ENCODE measurements at regions of chr18 and their contacts with region 1.

Region 1: DNA sequence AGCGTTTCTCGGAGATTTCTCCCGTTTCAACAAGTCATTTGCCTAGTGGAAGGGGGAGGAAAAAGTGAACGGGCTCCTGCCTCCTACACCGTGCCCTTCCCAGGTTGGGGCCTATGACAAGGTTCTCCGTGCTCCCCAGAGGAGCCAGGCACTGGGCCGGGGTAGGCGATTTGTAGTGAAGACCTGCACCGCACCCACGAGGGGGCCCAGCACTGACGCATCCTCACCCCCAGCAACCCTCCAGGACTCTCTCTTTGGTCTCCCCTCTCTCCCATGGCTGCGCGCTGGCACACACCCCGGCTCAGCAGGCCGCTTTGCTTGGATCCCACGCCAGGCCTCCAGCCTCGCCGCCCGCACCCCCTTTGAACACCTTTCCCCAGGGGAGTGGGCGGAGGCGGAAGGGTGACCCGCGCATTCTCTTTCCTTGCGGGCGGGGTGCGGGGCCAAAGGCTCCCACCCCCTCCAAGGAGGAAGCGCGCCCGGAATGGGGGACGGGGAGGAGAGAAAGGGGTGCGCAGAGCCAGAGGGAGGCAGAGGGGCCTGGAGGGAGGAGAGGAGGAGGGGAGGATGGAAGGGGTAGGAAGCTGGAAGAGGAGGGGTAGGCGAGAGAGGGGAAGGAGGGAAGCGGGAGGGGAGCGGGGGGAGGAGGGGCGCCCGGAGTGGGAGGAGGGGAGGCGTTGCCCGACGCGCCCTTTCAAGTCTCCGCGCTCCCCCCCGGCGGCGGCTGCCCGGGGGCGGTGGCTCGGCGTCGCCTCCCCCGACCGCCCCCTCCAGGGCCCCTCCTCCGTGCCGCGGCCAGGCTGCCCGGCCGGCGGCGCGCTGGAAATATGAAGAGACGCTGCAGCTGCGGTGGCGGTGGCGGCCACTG is at the start of gene APCDD1:
- DNase-seq: peak in 1 of 2 donors; percentile 63
- H3K4me3 ChIP-seq: peak within 1 kb of the TSS; percentile 62 to 91 (median 77)
- H3K27ac ChIP-seq: peak within 1 kb of the TSS; percentile 88 to 94
- H3K4me1 ChIP-seq: no peaks in the 10 kb centered on the region
- H3K27me3 ChIP-seq: no peaks in the 10 kb centered on the region
- CTCF ChIP-seq: peak in 1 of 3 donors; percentile 27
- POLR2A ChIP-seq: no peak
- total RNA-seq, gene APCDD1: 34.1 to 275 (median 38.8) TPM

Region 2: DNA sequence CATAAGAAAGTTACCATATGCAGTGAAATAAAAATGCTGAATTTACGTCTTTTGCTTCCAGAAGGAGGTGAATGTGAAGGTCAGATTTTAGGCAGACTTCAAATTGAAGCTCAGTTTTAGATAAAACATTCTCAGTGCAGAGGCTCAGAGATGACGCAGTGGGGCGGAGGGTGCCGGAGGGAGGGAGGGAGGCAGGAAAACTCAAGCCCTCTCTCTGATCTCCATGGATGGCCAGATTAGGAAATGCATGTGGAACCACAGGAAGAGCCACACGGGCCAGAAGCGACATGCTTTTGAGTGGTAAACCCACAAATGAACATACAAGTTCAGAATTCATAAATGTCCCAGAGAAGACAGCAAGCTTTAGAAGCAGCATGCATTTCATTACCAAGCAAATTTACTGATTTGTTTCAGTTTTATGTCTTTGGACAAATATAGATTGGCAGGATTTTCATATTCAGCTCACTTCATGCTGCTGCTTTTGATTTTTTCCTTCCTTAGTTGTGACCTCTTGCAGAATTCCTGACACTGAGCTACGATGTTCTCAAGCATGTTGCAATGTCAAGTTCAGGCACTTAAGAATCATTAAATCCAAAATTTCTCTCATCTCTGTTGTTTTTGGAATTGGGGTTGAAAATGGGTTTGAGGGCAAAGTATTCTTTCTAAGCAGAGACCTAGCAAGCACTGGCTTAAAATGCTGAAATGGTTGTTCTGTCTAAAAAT is 29.3 kb before region 1 on chr18:
- intact Hi-C with region 1: no loop called
- DNase-seq: no peak
- H3K4me3 ChIP-seq: no peak overlapping the region
- H3K27ac ChIP-seq: peak overlapping the region in 1 of 2 donors; percentile 58
- H3K4me1 ChIP-seq: peaks cover 0 to 7% of the 10 kb centered on the region in 2 donors
- H3K27me3 ChIP-seq: no peaks in the 10 kb centered on the region
- CTCF ChIP-seq: no peak
- POLR2A ChIP-seq: no peak

Region 3: DNA sequence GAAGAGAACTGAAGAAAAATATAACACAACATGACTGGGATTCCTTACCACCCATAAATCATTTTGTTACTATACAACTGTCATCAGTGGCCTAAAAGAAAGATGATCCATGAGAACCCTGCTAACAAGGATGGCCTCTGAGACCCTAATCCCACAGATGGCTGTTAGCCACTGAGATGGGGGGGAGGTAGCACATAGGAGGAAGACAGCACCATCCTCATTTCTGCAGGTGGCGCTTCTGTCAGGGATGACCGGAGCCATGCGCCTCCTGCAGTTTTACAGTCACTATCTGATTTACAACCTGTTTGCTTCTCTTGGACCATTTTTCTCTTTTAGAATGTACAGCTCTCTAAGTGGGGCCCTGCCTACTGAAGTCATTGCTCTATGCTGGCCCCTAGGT is 351.6 kb after region 1 on chr18:
- intact Hi-C with region 1: loop called (anchors 5 kb)
- DNase-seq: no peak
- H3K4me3 ChIP-seq: no peak overlapping the region
- H3K27ac ChIP-seq: no peak overlapping the region
- H3K4me1 ChIP-seq: no peaks in the 10 kb centered on the region
- H3K27me3 ChIP-seq: no peaks in the 10 kb centered on the region
- CTCF ChIP-seq: no peak
- POLR2A ChIP-seq: no peak

Measured in breast epithelium (tissue), 4 donors.